Activated CD4-positive, alpha-beta T cell treated with anti-CD3 and anti-CD28 coated beads for 36 hours (primary cell): ENCODE measurements at regions of chr3 and their contacts with region 1.

Region 1: GRCh38 chr3:59424268-59425010 is 374.6 kb upstream of the CFAP20DC start:
- DNase-seq: peak; percentile 35
- ATAC-seq: no peak
- H3K4me3 Mint-ChIP-seq: peak overlapping the region; percentile 8
- H3K27ac Mint-ChIP-seq: peak overlapping the region; percentile 68
- H3K4me1 Mint-ChIP-seq: peaks cover 74% of the 10 kb centered on the region
- H3K27me3 Mint-ChIP-seq: peaks cover 10% of the 10 kb centered on the region

Region 2: GRCh38 chr3:58683466-58683865 is 741.0 kb before region 1 on chr3:
- CTCF ChIA-PET with region 1: no interaction called
- POLR2A ChIA-PET with region 1: no interaction called
- intact Hi-C with region 1: loop called in 1 of 2 experiments (anchors 10 kb)
- DNase-seq: peak; percentile 65
- ATAC-seq: peak; percentile 68
- H3K4me3 Mint-ChIP-seq: no peak overlapping the region
- H3K27ac Mint-ChIP-seq: no peak overlapping the region
- H3K4me1 Mint-ChIP-seq: peaks cover 11% of the 10 kb centered on the region
- H3K27me3 Mint-ChIP-seq: peaks cover 27% of the 10 kb centered on the region

Region 3: GRCh38 chr3:58824285-58824684 is 600.2 kb before region 1 on chr3:
- CTCF ChIA-PET with region 1: no interaction called
- POLR2A ChIA-PET with region 1: no interaction called
- intact Hi-C with region 1: no loop called
- DNase-seq: peak; percentile 69
- ATAC-seq: no peak
- H3K4me3 Mint-ChIP-seq: no peak overlapping the region
- H3K27ac Mint-ChIP-seq: no peak overlapping the region
- H3K4me1 Mint-ChIP-seq: no peaks in the 10 kb centered on the region
- H3K27me3 Mint-ChIP-seq: no peaks in the 10 kb centered on the region

Region 4: GRCh38 chr3:59235634-59236012 is 188.8 kb before region 1 on chr3:
- CTCF ChIA-PET with region 1: no interaction called
- POLR2A ChIA-PET with region 1: no interaction called
- intact Hi-C with region 1: loop called (anchors 10 kb)
- DNase-seq: peak; percentile 65
- ATAC-seq: peak; percentile 91
- H3K4me3 Mint-ChIP-seq: no peak overlapping the region
- H3K27ac Mint-ChIP-seq: no peak overlapping the region
- H3K4me1 Mint-ChIP-seq: peaks cover 14% of the 10 kb centered on the region
- H3K27me3 Mint-ChIP-seq: peaks cover 7% of the 10 kb centered on the region

Region 5: GRCh38 chr3:59286791-59287531 is 137.5 kb before region 1 on chr3:
- CTCF ChIA-PET with region 1: no interaction called
- POLR2A ChIA-PET with region 1: no interaction called
- intact Hi-C with region 1: loop called in 1 of 2 experiments (anchors 1 kb)
- DNase-seq: peak; percentile 63
- ATAC-seq: peak; percentile 96
- H3K4me3 Mint-ChIP-seq: no peak overlapping the region
- H3K27ac Mint-ChIP-seq: peak overlapping the region; percentile 78
- H3K4me1 Mint-ChIP-seq: peaks cover 29% of the 10 kb centered on the region
- H3K27me3 Mint-ChIP-seq: peaks cover 3% of the 10 kb centered on the region

Region 6: DNA sequence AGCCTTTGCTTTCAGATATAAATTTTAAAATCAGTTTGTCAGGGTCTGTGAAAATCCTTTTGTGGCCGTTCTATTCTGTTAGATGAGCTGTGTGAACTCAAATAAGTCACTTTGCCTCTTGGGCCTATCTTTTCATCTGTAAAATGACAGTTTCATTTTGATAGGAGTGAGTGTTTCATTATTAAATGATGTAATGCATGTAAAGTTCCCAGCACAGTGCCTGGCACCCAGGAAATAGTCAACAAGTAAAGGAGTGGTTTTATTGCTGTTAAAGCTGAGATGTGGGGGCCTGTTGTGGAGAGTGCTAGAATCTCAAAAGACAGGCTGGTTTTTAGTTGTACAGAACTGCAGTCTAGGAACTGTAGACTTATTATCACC is 19.8 kb after region 1 on chr3:
- CTCF ChIA-PET with region 1: interaction called, 4 read pairs
- POLR2A ChIA-PET with region 1: interaction called, 7 read pairs
- intact Hi-C with region 1: loop called (anchors 1 kb)
- DNase-seq: peak; percentile 51
- ATAC-seq: peak; percentile 88
- H3K4me3 Mint-ChIP-seq: peak overlapping the region; percentile 55
- H3K27ac Mint-ChIP-seq: peak overlapping the region; percentile 93
- H3K4me1 Mint-ChIP-seq: peaks cover 58% of the 10 kb centered on the region
- H3K27me3 Mint-ChIP-seq: no peaks in the 10 kb centered on the region

Region 7: DNA sequence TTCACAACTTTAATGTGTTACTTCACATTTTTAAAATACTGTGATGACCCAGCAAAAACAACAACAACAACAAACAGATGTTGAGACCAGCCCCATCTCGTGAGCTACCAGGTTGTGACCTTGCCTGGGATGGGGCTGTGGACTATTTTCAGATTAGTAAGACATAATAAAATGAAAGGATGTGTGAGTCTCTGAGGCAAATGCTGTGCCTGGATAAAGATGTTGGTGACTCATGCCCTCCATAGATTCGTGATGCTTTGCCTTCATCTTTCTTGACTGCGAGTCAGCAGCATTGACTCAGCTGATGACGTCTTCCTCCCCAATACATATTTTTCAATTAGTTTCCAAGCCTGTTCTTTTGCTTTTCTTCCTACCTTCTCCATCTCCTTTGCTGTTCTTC is 78.4 kb after region 1 on chr3:
- CTCF ChIA-PET with region 1: no interaction called
- POLR2A ChIA-PET with region 1: no interaction called
- intact Hi-C with region 1: loop called in 1 of 2 experiments (anchors 2 kb)
- DNase-seq: peak; percentile 71
- ATAC-seq: peak; percentile 97
- H3K4me3 Mint-ChIP-seq: no peak overlapping the region
- H3K27ac Mint-ChIP-seq: no peak overlapping the region
- H3K4me1 Mint-ChIP-seq: peaks cover 10% of the 10 kb centered on the region
- H3K27me3 Mint-ChIP-seq: no peaks in the 10 kb centered on the region

Region 8: GRCh38 chr3:59514865-59515482 is 90.5 kb after region 1 on chr3:
- CTCF ChIA-PET with region 1: no interaction called
- POLR2A ChIA-PET with region 1: no interaction called
- intact Hi-C with region 1: no loop called
- DNase-seq: no peak
- ATAC-seq: no peak
- H3K4me3 Mint-ChIP-seq: no peak overlapping the region
- H3K27ac Mint-ChIP-seq: no peak overlapping the region
- H3K4me1 Mint-ChIP-seq: peaks cover 12% of the 10 kb centered on the region
- H3K27me3 Mint-ChIP-seq: peaks cover 2% of the 10 kb centered on the region

Region 9: DNA sequence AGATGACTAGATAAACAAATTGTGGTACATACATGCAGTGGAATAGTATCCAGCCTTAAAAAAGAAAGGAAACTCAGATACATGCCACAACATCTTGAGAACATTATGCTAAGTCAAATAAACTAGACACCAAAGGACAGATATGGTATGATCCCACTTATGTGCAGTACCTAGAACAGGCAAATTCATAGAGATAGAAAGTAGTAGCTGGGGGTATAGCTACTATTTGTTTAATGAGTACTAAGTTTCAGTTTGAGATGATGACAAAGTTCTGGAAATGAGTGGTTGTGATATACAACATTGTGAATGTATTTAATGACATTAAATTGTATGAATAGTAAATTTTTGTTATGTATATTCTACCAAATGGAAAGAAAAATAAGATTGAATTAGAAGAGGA is 102.6 kb after region 1 on chr3:
- CTCF ChIA-PET with region 1: interaction called, 3 read pairs
- POLR2A ChIA-PET with region 1: no interaction called
- intact Hi-C with region 1: loop called in 1 of 2 experiments (anchors 1 kb)
- DNase-seq: no peak
- ATAC-seq: peak; percentile 98
- H3K4me3 Mint-ChIP-seq: no peak overlapping the region
- H3K27ac Mint-ChIP-seq: peak overlapping the region; percentile 55
- H3K4me1 Mint-ChIP-seq: peaks cover 18% of the 10 kb centered on the region
- H3K27me3 Mint-ChIP-seq: peaks cover 3% of the 10 kb centered on the region